Cardiac septum (tissue), 1 donor: ENCODE measurements at regions of chr15 and their contacts with region 1.

Region 1: GRCh38 chr15:78872972-78873792 is 492 bp downstream of the MORF4L1 start:
- DNase-seq: peak; percentile 90

Region 2: DNA sequence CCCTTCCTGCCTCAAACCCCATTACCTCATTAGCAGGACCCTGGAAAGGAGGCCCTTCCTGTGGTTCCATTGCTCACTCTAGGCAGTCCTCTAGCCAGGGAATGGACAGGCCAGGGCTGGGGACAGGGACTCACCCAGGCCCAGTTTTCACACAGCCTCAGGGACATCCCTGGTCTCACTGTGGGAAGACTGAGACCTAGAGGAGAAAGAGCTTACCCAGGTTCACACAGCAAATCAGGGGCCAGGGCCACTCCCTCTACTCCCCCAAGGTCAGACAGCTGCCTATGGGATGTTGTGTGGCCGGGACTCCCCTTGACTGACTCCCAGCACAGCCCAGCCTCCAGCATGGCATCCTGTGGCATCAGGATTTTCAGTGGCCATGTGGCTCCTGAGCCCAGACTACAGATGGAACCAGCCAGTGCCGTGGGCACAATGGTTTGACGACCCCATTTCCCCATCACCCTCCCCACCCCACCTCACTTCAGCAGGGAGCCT is 111.2 kb before region 1 on chr15:
- intact Hi-C with region 1: loop called (anchors 5 kb)
- DNase-seq: peak; percentile 44

Region 3: DNA sequence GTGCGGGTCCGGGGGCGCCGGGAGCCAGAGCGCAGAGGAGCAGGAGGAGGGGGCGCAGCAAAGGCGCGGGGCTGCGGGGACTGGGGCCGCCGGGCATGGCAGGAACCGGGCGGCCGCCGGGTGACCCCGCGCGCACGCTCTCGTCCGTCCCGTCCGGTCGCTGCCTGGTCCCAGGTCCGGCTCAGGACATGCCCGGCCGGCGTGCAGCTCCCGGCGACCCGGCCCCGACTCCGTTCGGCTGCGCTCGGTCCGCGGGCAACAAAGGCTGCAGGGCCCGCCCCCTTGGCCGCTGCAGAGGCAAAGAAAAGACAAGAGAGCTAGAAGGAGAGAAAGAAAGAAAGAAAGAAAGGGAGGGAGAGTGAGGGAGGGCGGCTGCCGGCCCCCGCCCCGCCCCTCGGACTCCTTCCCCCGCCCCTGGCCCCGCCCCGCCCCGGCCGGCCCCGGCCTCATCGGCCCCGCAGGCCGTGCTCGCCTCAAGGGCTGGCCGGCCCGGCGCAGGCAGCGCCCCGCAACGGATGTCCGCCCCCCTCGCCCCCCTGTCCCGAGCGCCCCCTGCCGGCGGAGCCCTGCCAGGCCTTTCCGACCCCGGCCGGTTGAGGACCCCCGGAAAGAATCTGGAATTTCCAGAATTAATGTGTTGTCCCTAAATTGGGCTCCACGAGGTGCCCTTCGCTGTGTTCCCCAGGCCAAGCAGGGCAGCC is 61.9 kb before region 1 on chr15 and contains the start of gene ADAMTS7:
- intact Hi-C with region 1: loop called (anchors 5 kb)
- DNase-seq: peak; percentile 86
- total RNA-seq, gene ADAMTS7: 17.8 TPM

Region 4: DNA sequence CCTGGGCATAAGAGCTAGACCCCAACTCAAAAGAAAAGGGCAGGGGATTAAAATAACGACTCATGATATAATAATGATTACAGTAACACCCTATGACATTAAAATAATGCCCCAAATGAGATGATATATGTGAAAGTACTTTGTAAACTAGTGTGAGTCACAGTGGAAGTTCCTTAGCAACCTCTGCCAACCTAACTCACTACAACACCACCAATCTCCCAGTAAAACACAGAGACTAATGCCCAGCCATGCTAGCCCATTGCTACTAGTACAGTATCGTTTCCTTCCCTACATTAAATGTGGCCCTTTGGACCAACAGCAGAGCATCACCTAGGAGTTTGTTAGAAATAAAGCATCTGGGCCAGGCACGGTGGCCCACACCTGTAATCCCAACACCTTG is 50.7 kb before region 1 on chr15:
- intact Hi-C with region 1: no loop called
- DNase-seq: no peak

Region 5: DNA sequence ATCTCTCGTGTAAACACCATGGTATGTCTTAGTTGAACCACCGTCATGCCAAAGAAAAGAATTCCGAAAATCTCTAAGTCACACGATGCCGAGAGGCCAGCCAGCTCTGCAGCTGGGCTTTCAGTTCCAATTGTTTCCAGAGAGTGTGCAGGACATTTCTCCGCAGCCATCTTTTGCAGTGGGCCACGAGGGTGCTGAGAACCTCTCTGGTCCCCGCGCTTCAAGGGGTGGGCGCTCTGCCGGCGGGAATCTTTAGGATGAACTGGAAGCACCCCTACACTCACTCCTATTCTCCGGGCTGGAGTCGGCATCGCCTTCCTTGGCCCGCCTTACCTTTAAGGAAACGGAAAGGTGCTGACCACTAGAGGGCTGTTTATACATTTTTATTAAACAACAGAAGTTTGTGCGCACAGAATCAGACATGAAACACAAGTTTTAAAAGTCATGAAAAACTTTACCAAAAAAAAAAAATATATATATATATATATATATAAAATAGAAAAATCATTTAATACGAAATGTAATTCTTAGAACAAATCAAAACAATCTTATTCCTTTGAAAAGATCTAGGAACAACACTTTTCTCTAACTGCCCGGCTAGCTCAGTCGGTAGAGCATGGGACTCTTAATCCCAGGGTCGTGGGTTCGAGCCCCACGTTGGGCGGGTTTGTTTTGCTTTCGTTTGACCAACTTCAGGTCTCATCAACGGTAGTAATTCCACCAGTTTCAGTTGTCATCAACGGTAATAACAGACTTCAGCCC is 13.0 kb before region 1 on chr15:
- intact Hi-C with region 1: no loop called
- DNase-seq: no peak